Adrenal gland (tissue), 19 donors: ENCODE measurements at regions of chr4 and their contacts with region 1.

Region 1: DNA sequence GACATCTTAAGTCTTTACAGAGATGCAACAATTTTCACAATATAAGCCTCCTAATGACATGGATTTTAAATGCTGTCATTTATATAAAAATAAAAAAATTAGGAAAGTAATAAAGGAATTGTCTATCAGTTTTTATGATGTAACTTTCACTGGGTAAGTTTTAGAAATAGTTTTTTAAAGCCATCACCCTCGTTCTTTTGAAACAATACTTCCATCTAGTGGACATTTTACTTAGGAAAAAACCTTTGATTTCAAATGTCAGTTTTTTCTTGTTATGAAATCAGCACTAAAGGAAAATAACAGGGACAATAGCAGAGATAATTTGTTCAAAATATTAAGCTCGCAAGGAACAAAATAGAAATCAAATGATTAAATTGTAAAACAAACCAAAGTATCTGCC is 24.3 kb upstream of the NDNF start:
- DNase-seq: no peak
- H3K4me3 ChIP-seq: no peak overlapping the region
- H3K27ac ChIP-seq: no peak overlapping the region
- H3K4me1 ChIP-seq: no peaks in the 10 kb centered on the region
- H3K27me3 ChIP-seq: no peaks in the 10 kb centered on the region
- CTCF ChIP-seq: peak; percentile 45 to 74 (median 62)
- POLR2A ChIP-seq: no peak

Region 2: DNA sequence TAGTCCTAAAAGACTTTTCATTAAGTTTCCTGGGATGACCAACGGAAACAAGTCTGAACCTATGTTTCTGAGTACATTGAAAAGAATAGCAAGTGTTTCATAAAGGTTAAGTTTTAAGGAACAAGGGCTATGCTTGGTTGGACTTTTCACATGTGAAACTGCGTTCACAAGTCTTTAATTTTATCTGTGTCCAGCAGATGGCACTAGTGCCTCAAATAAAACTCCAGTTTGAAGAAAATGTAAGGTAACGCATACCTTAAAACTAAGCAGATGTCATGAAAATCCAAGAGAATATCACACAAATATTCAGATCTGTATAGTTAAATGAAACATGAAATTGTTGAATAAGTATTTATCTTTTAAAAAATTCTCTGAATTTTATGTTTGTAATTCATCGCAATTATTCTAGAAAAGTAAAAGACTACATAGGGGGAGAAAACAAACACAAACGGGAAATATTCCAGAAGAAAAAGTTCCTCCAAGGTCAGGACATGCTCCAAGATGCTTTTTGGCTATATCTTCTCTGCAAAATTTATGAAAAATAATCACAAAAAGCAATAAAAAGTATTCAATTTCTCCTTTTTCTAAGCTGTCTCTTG is 940.4 kb before region 1 on chr4:
- intact Hi-C with region 1: loop called (anchors 5 to 10 kb)
- DNase-seq: peak in 4 of 7 donors; percentile 14 to 29 (median 18)
- H3K4me3 ChIP-seq: no peak overlapping the region
- H3K27ac ChIP-seq: no peak overlapping the region
- H3K4me1 ChIP-seq: no peaks in the 10 kb centered on the region
- H3K27me3 ChIP-seq: no peaks in the 10 kb centered on the region
- CTCF ChIP-seq: peak; percentile 46 to 73 (median 66)
- POLR2A ChIP-seq: no peak

Region 3: DNA sequence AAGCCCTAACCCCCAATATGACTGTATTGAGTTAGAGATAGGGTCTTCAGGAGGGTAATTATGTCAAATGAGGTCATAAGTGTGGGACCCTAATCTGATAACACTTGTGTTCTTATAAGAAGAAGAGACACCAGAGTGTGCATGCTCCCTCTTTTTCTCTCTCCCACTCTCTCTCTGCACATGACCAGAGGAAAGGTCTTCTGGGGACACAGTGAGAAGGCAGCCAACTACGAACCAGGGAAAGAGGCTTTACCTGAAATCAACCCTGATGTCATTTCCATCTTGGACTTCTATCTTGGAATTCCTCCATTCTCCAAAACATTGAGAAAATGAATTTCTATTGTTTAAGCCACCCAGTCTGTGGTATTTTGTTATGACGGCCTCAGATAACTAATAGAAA is 932.7 kb before region 1 on chr4:
- intact Hi-C with region 1: loop called (anchors 5 to 10 kb)
- DNase-seq: no peak
- H3K4me3 ChIP-seq: no peak overlapping the region
- H3K27ac ChIP-seq: no peak overlapping the region
- H3K4me1 ChIP-seq: no peaks in the 10 kb centered on the region
- H3K27me3 ChIP-seq: no peaks in the 10 kb centered on the region
- CTCF ChIP-seq: no peak
- POLR2A ChIP-seq: no peak